OCI-LY7 (cell line): ENCODE measurements at regions of chr4 and their contacts with region 1.

Region 1: GRCh38 chr4:153750197-153750817 is 9.5 kb downstream of the RNF175 start:
- DNase-seq: peak; percentile 83
- H3K4me3 ChIP-seq: no peak overlapping the region
- H3K27ac ChIP-seq: no peak overlapping the region
- H3K4me1 ChIP-seq: no peaks in the 10 kb centered on the region
- CTCF ChIP-seq: peak; percentile 90

Region 2: DNA sequence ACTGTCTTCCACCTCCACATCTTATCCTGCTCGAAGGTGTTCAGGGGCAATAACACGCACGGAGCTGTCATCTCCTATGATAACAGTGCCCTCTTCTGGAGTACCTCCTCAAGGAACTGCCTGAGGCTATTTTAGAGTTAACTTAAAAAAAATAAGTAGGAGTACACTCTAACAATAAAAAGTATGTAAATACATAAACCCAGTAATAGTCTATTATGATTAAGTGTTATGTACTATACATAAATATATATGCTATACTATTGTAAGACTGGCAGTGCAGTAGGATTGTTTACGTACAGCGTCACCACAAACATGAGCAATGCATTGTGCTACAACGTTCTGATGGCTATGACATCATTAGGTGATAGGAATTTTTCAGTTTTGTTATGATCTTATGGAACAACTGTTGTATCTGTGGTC is 100.7 kb before region 1 on chr4:
- CTCF ChIA-PET with region 1: interaction called, 3 read pairs
- POLR2A ChIA-PET with region 1: interaction called, 7 read pairs
- intact Hi-C with region 1: loop called (anchors 1 kb)
- DNase-seq: peak; percentile 73
- H3K4me3 ChIP-seq: no peak overlapping the region
- H3K27ac ChIP-seq: no peak overlapping the region
- H3K4me1 ChIP-seq: peaks cover 22% of the 10 kb centered on the region
- CTCF ChIP-seq: peak; percentile 86